ENCODE measurements at regions of chr13 and their contacts with region 1.

Region 1: GRCh38 chr13:105773863-105774538 is 761.5 kb downstream of the EFNB2 start:
- DNase-seq: peak; percentile 63
- ATAC-seq: peak; percentile 79
- H3K4me3 ChIP-seq: peak overlapping the region; percentile 26 to 41
- H3K27ac ChIP-seq: peak overlapping the region; percentile 48
- H3K4me1 ChIP-seq: peaks cover 28 to 36% of the 10 kb centered on the region in 2 experiments
- H3K27me3 ChIP-seq: no peaks in the 10 kb centered on the region
- CTCF ChIP-seq: no peak
- POLR2A ChIP-seq: no peak
- RAD21 ChIP-seq: no peak

Region 2: DNA sequence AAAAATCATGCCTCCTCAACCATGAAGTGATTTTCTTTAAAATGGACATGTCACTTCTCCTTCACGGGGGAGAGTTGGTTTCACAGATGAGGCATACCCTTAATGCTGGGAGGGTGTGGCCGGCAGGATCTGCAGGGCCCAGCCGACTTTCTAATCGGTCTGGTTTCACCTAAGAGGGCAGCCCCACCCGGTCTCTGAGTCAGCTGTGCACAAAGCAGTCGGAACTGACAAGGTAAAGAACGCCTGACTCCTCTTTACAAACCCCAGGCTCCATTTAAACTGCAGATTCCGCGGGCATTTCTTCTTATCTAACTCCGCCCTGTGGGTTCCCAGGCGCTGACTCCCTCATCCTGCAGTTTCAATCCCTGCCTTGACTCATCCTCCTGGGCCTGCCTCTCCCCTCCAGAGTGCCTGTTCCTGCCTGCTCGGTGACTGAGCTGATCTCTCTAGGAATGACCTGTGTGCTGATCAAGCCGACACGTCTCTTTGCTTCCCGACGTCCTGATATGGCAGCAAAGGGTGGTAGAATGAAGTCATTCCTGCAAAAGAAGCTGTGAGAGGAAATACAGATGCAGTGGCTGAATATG is 698.0 kb after region 1 on chr13:
- CTCF ChIA-PET with region 1: no interaction called
- POLR2A ChIA-PET with region 1: no interaction called
- RAD21 ChIA-PET with region 1: no interaction called
- intact Hi-C with region 1: loop called (anchors 10 kb)
- DNase-seq: peak; percentile 95
- ATAC-seq: peak; percentile 98
- H3K4me3 ChIP-seq: peak overlapping the region; percentile 28 to 44
- H3K27ac ChIP-seq: peak overlapping the region; percentile 42; the same call in 1 of the 2 replicates
- H3K4me1 ChIP-seq: peaks cover 15 to 38% of the 10 kb centered on the region in 2 experiments
- H3K27me3 ChIP-seq: no peaks in the 10 kb centered on the region
- CTCF ChIP-seq: no peak
- POLR2A ChIP-seq: no peak
- RAD21 ChIP-seq: peak; percentile 37

Measured in HCT116 (cell line).